A549 (cell line): ENCODE measurements at regions of chr20 and their contacts with region 1.

Region 1: DNA sequence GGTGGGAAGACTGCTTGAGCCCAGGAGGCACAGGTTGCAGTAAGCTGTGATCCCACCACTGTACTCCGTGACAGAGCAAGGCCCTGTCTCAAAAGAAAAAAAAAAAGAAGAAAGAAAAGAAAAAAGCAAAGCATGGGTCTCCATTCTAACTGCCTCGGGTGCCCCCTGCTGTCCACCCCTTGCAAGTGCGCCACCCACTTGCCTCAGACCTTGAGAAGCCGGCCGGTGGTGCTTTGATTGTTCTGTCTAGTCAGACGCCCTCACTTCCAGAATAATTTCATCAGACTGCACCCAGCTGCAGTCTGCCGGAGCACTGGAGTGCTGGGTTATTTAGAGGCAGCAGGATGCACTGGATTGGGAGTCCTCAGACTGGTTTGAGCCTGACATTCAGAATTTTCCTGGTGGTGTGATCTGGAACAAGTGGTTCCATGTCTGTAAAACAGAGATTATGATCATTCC is 17.6 kb upstream of the TM9SF4 start:
- DNase-seq: peak; percentile 63 to 77
- ATAC-seq: peak; percentile 70 to 94
- H3K4me3 ChIP-seq: no peak overlapping the region
- H3K27ac ChIP-seq: 0 out of 6 replicates have a peak overlapping the region, but pooled peaks of 1 of the 2 experiments have one; percentile 20
- H3K4me1 ChIP-seq: no peaks in the 10 kb centered on the region
- CTCF ChIP-seq: peak; percentile 83
- EP300 ChIP-seq: no peak
- POLR2A ChIP-seq: no peak
- RAD21 ChIP-seq: peak; percentile 70 to 71

Region 2: DNA sequence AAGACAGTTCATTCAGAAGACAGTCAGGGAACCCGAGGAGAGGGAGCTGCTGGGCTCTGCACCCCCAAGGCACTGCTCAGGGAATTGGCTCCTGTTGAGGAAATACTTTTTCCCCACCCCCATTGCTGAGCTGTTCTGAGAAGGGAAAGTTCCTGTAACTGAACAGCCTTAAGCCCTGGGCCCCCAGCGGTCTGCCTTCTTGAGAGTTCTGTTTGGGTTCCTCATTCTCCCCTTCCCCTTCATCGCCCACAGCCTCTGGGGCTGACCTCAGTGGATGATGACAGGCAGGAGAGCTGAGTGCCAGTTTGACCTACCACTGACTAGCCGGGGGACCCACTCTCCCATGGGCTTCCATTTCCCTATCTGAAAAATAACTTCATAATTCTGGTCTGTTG is 29.1 kb before region 1 on chr20:
- CTCF ChIA-PET with region 1: interaction called, 10 read pairs
- POLR2A ChIA-PET with region 1: no interaction called
- DNase-seq: no peak
- ATAC-seq: no peak
- H3K4me3 ChIP-seq: no peak overlapping the region
- H3K27ac ChIP-seq: no peak overlapping the region
- H3K4me1 ChIP-seq: no peaks in the 10 kb centered on the region
- CTCF ChIP-seq: no peak
- EP300 ChIP-seq: no peak
- POLR2A ChIP-seq: no peak
- RAD21 ChIP-seq: no peak

Region 3: DNA sequence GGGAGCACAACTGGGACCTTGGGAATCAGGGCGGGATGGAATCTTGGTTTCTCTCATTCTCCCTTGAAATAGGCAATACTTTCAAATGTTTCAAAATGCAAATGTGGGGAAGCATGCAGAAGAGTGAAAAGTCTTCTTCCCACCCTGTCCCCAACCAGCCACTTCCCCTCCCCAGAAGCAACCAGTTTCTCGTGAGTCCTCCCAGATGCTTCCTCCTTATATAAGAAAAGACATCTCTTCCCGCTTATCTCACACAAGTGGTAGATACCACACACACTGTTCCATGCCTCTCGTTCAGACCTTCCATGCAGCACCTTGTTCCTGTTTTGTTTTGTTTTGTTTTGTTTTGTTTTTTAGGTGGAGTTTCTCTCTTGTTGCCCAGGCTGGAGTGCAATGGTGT is 14.7 kb before region 1 on chr20:
- CTCF ChIA-PET with region 1: interaction called, 38 read pairs
- POLR2A ChIA-PET with region 1: no interaction called
- DNase-seq: no peak
- ATAC-seq: no peak
- H3K4me3 ChIP-seq: no peak overlapping the region
- H3K27ac ChIP-seq: no peak overlapping the region
- H3K4me1 ChIP-seq: no peaks in the 10 kb centered on the region
- CTCF ChIP-seq: no peak
- EP300 ChIP-seq: no peak
- POLR2A ChIP-seq: no peak
- RAD21 ChIP-seq: no peak

Region 4: GRCh38 chr20:32109392-32110172 is 17.7 kb after region 1 on chr20 and contains the start of gene TM9SF4:
- CTCF ChIA-PET with region 1: interaction called, 13 read pairs
- POLR2A ChIA-PET with region 1: no interaction called
- DNase-seq: peak; percentile 88 to 96
- ATAC-seq: peak; percentile 90 to 91
- H3K4me3 ChIP-seq: peak within 1 kb of the TSS; percentile 78
- H3K27ac ChIP-seq: peak within 1 kb of the TSS; percentile 98 to 99
- H3K4me1 ChIP-seq: peaks cover 10% of the 10 kb centered on the region; the same call in 2 of the 3 replicates
- CTCF ChIP-seq: no peak
- EP300 ChIP-seq: no peak
- POLR2A ChIP-seq: peak; percentile 79
- RAD21 ChIP-seq: no peak
- polyA plus RNA-seq, gene TM9SF4: 60.0 and 72.8 TPM in 2 replicates